ENCODE measurements at regions of chr19 and their contacts with region 1.

Region 1: GRCh38 chr19:48970923-48971395 is 5.8 kb downstream of the FTL start:
- DNase-seq: peak; percentile 91
- H3K4me3 Mint-ChIP-seq: no peak overlapping the region
- H3K27ac Mint-ChIP-seq: peak overlapping the region; percentile 28
- H3K4me1 Mint-ChIP-seq: peaks cover 21% of the 10 kb centered on the region
- H3K27me3 Mint-ChIP-seq: no peaks in the 10 kb centered on the region

Region 2: GRCh38 chr19:48784540-48784939 is 186.4 kb before region 1 on chr19:
- CTCF ChIA-PET with region 1: interaction called, 16 read pairs
- intact Hi-C with region 1: loop called (anchors 1 kb)
- DNase-seq: no peak
- H3K4me3 Mint-ChIP-seq: no peak overlapping the region
- H3K27ac Mint-ChIP-seq: no peak overlapping the region
- H3K4me1 Mint-ChIP-seq: peaks cover 2% of the 10 kb centered on the region
- H3K27me3 Mint-ChIP-seq: peaks cover 3% of the 10 kb centered on the region

Region 3: GRCh38 chr19:48795055-48795684 is 175.8 kb before region 1 on chr19:
- CTCF ChIA-PET with region 1: interaction called, 21 read pairs
- intact Hi-C with region 1: loop called (anchors 1 kb)
- DNase-seq: peak; percentile 89
- H3K4me3 Mint-ChIP-seq: peak overlapping the region; percentile 82
- H3K27ac Mint-ChIP-seq: peak overlapping the region; percentile 87
- H3K4me1 Mint-ChIP-seq: peaks cover 10% of the 10 kb centered on the region
- H3K27me3 Mint-ChIP-seq: no peaks in the 10 kb centered on the region

Region 4: GRCh38 chr19:48835734-48836088 is 135.2 kb before region 1 on chr19:
- CTCF ChIA-PET with region 1: interaction called, 7 read pairs
- intact Hi-C with region 1: loop called (anchors 1 kb)
- DNase-seq: peak; percentile 98
- H3K4me3 Mint-ChIP-seq: peak overlapping the region; percentile 73
- H3K27ac Mint-ChIP-seq: no peak overlapping the region
- H3K4me1 Mint-ChIP-seq: peaks cover 20% of the 10 kb centered on the region
- H3K27me3 Mint-ChIP-seq: peaks cover 2% of the 10 kb centered on the region

Region 5: GRCh38 chr19:48842789-48843162 is 128.2 kb before region 1 on chr19:
- CTCF ChIA-PET with region 1: interaction called, 25 read pairs
- intact Hi-C with region 1: loop called (anchors 2 kb)
- DNase-seq: peak; percentile 70
- H3K4me3 Mint-ChIP-seq: no peak overlapping the region
- H3K27ac Mint-ChIP-seq: no peak overlapping the region
- H3K4me1 Mint-ChIP-seq: no peaks in the 10 kb centered on the region
- H3K27me3 Mint-ChIP-seq: no peaks in the 10 kb centered on the region

Region 6: DNA sequence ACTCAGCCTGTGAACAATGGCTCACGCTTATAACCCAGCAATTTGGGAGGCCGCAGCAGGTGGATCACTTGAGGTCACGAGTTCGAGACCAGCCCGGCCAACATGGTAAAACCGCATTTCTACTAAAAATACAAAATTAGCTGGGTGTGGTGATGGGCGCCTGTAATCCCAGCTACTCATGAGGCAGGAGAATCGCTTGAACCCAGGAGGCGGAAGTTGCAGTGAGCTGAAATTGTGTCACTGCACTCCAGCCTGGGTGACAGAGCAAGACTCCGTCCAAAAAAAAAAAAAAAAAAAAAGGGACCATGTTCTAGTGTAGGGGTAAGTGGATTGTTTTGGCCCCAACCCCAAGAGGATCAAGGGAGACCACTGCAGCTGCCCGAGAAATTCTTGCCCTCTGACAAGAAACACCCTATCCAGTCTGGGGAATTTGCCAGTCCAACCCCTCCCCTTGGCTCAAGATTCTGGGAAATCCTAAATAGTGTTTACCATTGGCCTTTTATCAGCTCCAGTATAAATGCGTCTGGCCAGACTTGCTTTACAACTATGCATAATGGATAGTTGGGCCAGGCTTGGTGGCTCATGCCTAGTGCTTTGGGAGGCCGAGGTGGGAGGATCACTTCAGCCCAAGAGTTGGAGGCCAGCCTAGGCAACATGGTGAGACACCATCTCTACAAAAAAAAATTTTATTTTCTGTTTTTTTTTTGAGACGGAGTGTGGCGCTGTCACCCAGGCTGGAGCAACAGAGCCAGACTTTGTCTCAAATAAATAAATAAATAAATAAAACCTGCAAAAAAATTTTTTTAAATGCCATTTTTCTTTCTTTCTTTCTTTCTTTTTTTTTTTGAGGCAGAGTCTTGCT is 42.6 kb before region 1 on chr19:
- CTCF ChIA-PET with region 1: interaction called, 6 read pairs
- intact Hi-C with region 1: loop called (anchors 1 kb)
- DNase-seq: no peak
- H3K4me3 Mint-ChIP-seq: no peak overlapping the region
- H3K27ac Mint-ChIP-seq: no peak overlapping the region
- H3K4me1 Mint-ChIP-seq: peaks cover 9% of the 10 kb centered on the region
- H3K27me3 Mint-ChIP-seq: no peaks in the 10 kb centered on the region

Region 7: GRCh38 chr19:48954595-48955310 is 16.2 kb before region 1 on chr19 and contains the start of gene BAX:
- CTCF ChIA-PET with region 1: interaction called, 13 read pairs
- intact Hi-C with region 1: no loop called
- DNase-seq: peak; percentile 98
- H3K4me3 Mint-ChIP-seq: peak within 1 kb of the TSS; percentile 77
- H3K27ac Mint-ChIP-seq: peak within 1 kb of the TSS; percentile 89
- H3K4me1 Mint-ChIP-seq: peaks cover 29% of the 10 kb centered on the region
- H3K27me3 Mint-ChIP-seq: no peaks in the 10 kb centered on the region
- total RNA-seq, gene BAX: 267 to 302 TPM